ENCODE measurements at regions of chr1 and their contacts with region 1.

Region 1: DNA sequence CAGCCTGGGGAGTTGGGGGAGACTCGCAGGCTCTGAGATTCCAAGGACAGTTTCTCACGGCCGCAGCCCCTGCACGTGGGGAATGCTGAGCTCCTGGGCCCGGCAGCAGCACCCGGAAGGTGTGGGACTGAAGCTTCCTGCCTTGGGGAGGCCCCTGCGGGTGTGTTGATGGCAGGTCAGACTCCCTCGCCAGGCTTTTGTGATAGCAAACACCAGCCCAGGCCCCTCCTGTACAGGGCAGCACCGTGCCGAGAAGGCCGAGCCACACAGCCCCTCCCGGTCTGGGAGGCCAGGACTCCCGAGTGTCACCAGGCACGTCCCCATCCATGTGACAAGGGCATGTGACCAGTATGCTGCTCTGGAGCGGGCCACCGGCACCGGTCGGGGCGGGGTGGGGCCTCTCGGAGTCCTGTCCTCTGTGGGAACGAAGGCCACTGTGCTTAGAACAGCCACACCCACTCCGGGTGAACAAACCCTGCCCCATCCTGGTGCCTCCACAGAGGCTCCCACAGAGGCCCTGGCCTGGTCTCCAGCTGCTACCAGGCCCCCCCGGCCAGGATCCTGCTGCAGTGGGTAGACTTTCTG is 31.1 kb upstream of the ARHGEF16 start:
- DNase-seq: no peak
- ATAC-seq: no peak
- H3K4me3 ChIP-seq: no peak overlapping the region
- H3K4me3 Mint-ChIP-seq: no peak overlapping the region
- H3K27ac ChIP-seq: no peak overlapping the region
- H3K27ac Mint-ChIP-seq: no peak overlapping the region
- H3K4me1 ChIP-seq: peaks cover 4% of the 10 kb centered on the region
- H3K4me1 Mint-ChIP-seq: no peaks in the 10 kb centered on the region
- H3K27me3 ChIP-seq: peaks cover 4% of the 10 kb centered on the region
- H3K27me3 Mint-ChIP-seq: peaks cover 7 to 18% of the 10 kb centered on the region in 2 donors
- CTCF ChIP-seq: no peak

Region 2: GRCh38 chr1:2821966-2822620 is 601.2 kb before region 1 on chr1:
- intact Hi-C with region 1: loop called (anchors 5 kb)
- DNase-seq: peak in 1 of 2 donors; percentile 72
- ATAC-seq: peak in 2 of 3 donors; percentile 30 to 84
- H3K4me3 ChIP-seq: no peak overlapping the region
- H3K4me3 Mint-ChIP-seq: no peak overlapping the region
- H3K27ac ChIP-seq: no peak overlapping the region
- H3K27ac Mint-ChIP-seq: no peak overlapping the region
- H3K4me1 ChIP-seq: no peaks in the 10 kb centered on the region
- H3K4me1 Mint-ChIP-seq: peaks cover 0 to 3% of the 10 kb centered on the region in 2 donors
- H3K27me3 ChIP-seq: no peaks in the 10 kb centered on the region
- H3K27me3 Mint-ChIP-seq: peaks cover 7 to 9% of the 10 kb centered on the region in 2 donors
- CTCF ChIP-seq: peak; percentile 36

Region 3: GRCh38 chr1:3012456-3013291 is 410.7 kb before region 1 on chr1:
- intact Hi-C with region 1: loop called (anchors 2 kb)
- DNase-seq: peak; percentile 40 to 58
- ATAC-seq: peak in 2 of 3 donors; percentile 44 to 80
- H3K4me3 ChIP-seq: no peak overlapping the region
- H3K4me3 Mint-ChIP-seq: no peak overlapping the region
- H3K27ac ChIP-seq: no peak overlapping the region
- H3K27ac Mint-ChIP-seq: no peak overlapping the region
- H3K4me1 ChIP-seq: no peaks in the 10 kb centered on the region
- H3K4me1 Mint-ChIP-seq: peaks cover 0 to 6% of the 10 kb centered on the region in 2 donors
- H3K27me3 ChIP-seq: peaks cover 3% of the 10 kb centered on the region
- H3K27me3 Mint-ChIP-seq: peaks cover 0 to 8% of the 10 kb centered on the region in 2 donors
- CTCF ChIP-seq: peak; percentile 78

Region 4: DNA sequence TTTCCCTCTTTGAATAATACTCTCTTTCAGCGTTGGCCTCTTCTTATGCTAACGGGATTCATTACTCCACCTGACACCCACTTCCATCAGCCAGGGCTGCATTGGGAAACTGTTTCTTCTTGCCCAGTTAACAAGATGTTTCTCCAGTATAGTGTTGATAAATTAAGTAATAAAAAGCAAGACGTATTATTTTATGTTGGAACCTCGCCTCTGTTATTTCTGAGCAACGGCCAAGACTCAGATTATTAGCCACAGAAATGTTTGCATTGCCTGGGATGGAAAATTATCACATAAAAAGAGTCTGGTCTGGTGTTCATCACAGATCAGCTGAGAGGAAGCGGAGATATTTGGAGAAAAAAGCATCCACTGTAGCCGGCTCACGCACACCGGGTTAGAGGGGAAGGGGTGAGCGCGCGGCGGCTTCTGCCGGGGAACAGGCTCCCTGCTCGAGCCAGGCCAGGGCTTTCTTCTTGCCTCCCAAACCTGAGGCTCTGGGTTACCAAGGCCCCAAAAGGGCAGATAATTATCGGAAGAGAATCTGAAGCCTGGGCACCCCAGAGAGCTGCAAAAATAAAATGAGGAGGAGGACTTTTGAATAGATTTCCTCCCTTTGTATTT is 164.8 kb before region 1 on chr1:
- intact Hi-C with region 1: no loop called
- DNase-seq: no peak
- ATAC-seq: no peak
- H3K4me3 ChIP-seq: no peak overlapping the region
- H3K4me3 Mint-ChIP-seq: no peak overlapping the region
- H3K27ac ChIP-seq: no peak overlapping the region
- H3K27ac Mint-ChIP-seq: no peak overlapping the region
- H3K4me1 ChIP-seq: no peaks in the 10 kb centered on the region
- H3K4me1 Mint-ChIP-seq: peaks cover 0 to 6% of the 10 kb centered on the region in 2 donors
- H3K27me3 ChIP-seq: no peaks in the 10 kb centered on the region
- H3K27me3 Mint-ChIP-seq: no peaks in the 10 kb centered on the region
- CTCF ChIP-seq: no peak

Region 5: GRCh38 chr1:3393024-3393986 is 30.0 kb before region 1 on chr1:
- intact Hi-C with region 1: no loop called
- DNase-seq: no peak
- ATAC-seq: no peak
- H3K4me3 ChIP-seq: no peak overlapping the region
- H3K4me3 Mint-ChIP-seq: no peak overlapping the region
- H3K27ac ChIP-seq: no peak overlapping the region
- H3K27ac Mint-ChIP-seq: no peak overlapping the region
- H3K4me1 ChIP-seq: peaks cover 2% of the 10 kb centered on the region
- H3K4me1 Mint-ChIP-seq: no peaks in the 10 kb centered on the region
- H3K27me3 ChIP-seq: peaks cover 21% of the 10 kb centered on the region
- H3K27me3 Mint-ChIP-seq: peaks cover 38 to 55% of the 10 kb centered on the region in 2 donors
- CTCF ChIP-seq: no peak

Region 6: DNA sequence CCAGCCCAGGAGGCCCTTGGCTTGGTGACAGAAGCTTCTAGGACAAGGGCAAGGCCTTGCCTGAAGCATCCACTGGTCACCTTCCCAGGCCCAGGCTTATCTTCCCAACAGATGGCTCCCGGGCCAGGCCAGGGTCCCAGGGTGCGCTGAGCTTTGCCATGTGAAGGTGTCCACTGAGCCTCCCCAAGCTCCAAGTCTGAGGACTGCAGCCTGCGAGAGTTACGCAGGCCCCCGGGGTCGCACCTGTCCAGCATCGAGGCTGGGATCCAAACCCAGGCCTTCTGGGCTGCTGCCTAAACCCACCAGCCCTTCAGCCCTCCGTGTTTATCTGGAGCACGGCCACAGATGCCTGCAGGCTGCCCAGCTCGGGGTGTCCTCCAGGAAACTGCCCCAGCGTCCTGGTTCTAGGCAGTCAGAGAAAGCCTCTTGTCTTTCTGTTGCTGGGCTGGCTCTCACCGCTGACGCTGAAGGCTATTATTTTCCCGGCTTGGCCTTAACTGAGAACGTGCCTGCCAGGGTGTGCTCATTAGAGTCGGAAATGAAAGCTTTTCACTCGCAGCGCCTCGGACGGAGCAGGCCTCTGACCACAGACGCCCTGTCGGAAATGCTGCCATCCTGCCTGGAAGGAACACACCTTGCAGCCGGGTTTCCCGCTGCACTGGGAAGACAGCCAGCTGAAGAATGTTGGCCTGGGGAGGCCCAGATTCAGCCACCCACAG is 116.5 kb after region 1 on chr1:
- intact Hi-C with region 1: no loop called
- DNase-seq: no peak
- ATAC-seq: no peak
- H3K4me3 ChIP-seq: no peak overlapping the region
- H3K4me3 Mint-ChIP-seq: no peak overlapping the region
- H3K27ac ChIP-seq: no peak overlapping the region
- H3K27ac Mint-ChIP-seq: no peak overlapping the region
- H3K4me1 ChIP-seq: no peaks in the 10 kb centered on the region
- H3K4me1 Mint-ChIP-seq: no peaks in the 10 kb centered on the region
- H3K27me3 ChIP-seq: no peaks in the 10 kb centered on the region
- H3K27me3 Mint-ChIP-seq: no peaks in the 10 kb centered on the region
- CTCF ChIP-seq: no peak

Measured in natural killer cell (primary cell).